PC-3 (cell line): ENCODE measurements at regions of chr7 and their contacts with region 1.

Region 1: DNA sequence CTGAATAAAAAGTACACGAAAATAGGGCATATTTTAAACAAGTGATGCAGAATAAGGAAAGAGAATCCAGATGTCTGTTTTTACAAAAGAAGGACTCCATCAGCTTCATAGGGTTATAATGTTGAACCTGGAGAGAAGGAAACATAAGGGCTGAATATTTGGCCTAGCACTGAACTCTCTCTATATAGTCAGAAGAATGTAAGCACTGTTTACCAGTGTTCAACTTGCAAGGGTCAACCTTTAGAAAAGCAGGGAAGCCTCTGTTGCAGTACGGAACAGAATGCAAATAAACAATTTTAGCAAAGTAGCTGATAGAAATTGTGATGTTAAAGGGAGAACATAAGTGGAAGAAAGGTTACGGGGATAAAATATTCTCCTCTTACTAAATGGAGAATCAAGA is 16.2 kb downstream of the CDK6 start:
- DNase-seq: no peak
- ATAC-seq: no peak
- H3K4me3 ChIP-seq: no peak overlapping the region
- H3K27ac ChIP-seq: no peak overlapping the region
- H3K4me1 ChIP-seq: no peaks in the 10 kb centered on the region
- H3K27me3 ChIP-seq: no peaks in the 10 kb centered on the region
- CTCF ChIP-seq: no peak

Region 2: GRCh38 chr7:92809397-92810241 is 10.6 kb before region 1 on chr7:
- CTCF ChIA-PET with region 1: interaction called, 11 read pairs
- POLR2A ChIA-PET with region 1: no interaction called
- intact Hi-C with region 1: no loop called
- DNase-seq: peak; percentile 89
- ATAC-seq: peak; percentile 96
- H3K4me3 ChIP-seq: peak overlapping the region; percentile 31
- H3K27ac ChIP-seq: peak overlapping the region; percentile 89
- H3K4me1 ChIP-seq: peaks cover 21% of the 10 kb centered on the region
- H3K27me3 ChIP-seq: no peaks in the 10 kb centered on the region
- CTCF ChIP-seq: no peak